ENCODE measurements at regions of chr4 and their contacts with region 1.

Region 1: DNA sequence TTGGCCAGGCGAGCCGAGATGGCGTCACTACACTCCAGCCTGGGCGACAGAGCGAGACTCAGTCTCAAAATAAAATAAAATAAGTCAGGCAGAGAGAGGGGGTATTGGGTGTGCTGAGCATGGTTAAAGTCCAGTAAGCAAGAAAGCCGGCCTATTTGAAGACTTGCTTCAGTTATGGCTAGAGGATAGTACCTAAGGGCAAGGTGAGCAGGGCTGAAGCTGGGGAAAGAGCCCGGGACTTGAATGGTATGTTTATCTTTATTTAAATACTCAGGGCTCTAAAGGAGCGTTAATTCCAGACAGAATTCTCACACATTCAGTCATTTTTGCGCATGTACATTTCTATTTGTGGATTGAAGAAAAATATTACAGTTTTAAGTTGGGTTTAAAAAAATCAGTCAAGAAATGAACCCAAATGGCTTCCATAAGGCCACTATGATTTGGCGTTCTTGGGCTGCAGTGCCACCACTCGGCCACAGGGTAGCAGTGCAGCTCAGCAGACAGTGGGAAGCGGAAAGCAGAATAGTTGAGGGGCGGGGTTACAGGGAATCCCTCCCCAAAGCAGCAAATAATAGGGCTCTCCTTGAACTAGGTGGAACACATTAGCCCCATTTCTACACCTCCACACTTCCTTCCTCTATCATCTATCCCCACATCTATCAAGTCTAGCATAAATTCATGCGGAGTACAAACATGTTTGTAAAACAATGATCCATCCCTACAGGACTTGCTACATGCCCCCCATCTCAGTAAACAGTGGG is 37.2 kb upstream of the SH3D19 start:
- DNase-seq: peak; percentile 90
- H3K4me3 ChIP-seq: no peak overlapping the region
- H3K27ac ChIP-seq: no peak overlapping the region
- H3K4me1 ChIP-seq: no peaks in the 10 kb centered on the region
- H3K27me3 ChIP-seq: no peaks in the 10 kb centered on the region
- CTCF ChIP-seq: peak; percentile 94 to 97 (median 96)
- EP300 ChIP-seq: no peak
- POLR2A ChIP-seq: no peak

Region 2: GRCh38 chr4:151117371-151117962 is 245.1 kb before region 1 on chr4:
- intact Hi-C with region 1: loop called (anchors 1 kb)
- DNase-seq: no peak
- H3K4me3 ChIP-seq: no peak overlapping the region
- H3K27ac ChIP-seq: peak overlapping the region in 3 of 4 donors; percentile 34 to 61 (median 43)
- H3K4me1 ChIP-seq: peaks cover 0 to 10% (median 2%) of the 10 kb centered on the region in 4 donors
- H3K27me3 ChIP-seq: no peaks in the 10 kb centered on the region
- CTCF ChIP-seq: peak; percentile 15 to 76 (median 50)
- EP300 ChIP-seq: no peak
- POLR2A ChIP-seq: no peak

Region 3: DNA sequence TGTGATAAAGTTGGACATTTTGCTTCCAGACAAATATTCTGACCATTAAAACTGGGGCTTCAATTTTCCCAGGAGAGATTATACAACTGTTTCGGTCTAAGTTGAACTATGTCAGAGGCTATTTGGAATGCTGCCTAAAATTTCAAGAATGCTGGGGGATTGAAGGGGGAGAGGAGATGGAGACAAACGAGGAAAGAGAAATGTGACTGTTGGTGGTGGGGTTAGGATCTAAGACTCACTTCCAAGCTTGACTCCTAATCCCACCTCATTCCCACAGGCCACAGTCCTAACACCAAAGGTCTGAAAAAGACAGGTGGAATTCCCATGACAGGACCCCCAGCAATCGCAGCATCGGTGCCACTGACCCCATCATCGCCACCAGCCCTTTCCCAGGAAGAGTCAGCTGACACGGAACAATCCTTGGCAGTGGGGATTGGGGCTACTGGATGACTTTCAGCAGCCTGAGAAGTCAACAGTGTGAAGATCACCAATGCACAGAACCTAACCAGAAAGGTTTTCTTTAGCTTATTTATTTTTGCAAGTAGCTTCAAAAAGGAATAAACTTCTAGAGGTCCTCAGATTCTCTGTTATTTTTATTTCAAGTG is 159.6 kb before region 1 on chr4:
- intact Hi-C with region 1: no loop called
- DNase-seq: no peak
- H3K4me3 ChIP-seq: no peak overlapping the region
- H3K27ac ChIP-seq: peak overlapping the region; percentile 33 to 64 (median 48)
- H3K4me1 ChIP-seq: peaks cover 0 to 69% (median 61%) of the 10 kb centered on the region in 4 donors
- H3K27me3 ChIP-seq: no peaks in the 10 kb centered on the region
- CTCF ChIP-seq: no peak
- EP300 ChIP-seq: no peak
- POLR2A ChIP-seq: no peak

Region 4: GRCh38 chr4:151238477-151238876 is 124.1 kb before region 1 on chr4:
- intact Hi-C with region 1: loop called (anchors 5 kb)
- DNase-seq: no peak
- H3K4me3 ChIP-seq: no peak overlapping the region
- H3K27ac ChIP-seq: peak overlapping the region in 1 of 4 donors; percentile 1
- H3K4me1 ChIP-seq: peaks cover 0 to 20% (median 4%) of the 10 kb centered on the region in 4 donors
- H3K27me3 ChIP-seq: no peaks in the 10 kb centered on the region
- CTCF ChIP-seq: no peak
- EP300 ChIP-seq: no peak
- POLR2A ChIP-seq: no peak

Region 5: GRCh38 chr4:151276787-151277562 is 85.6 kb before region 1 on chr4 and contains the start of gene PRSS48:
- intact Hi-C with region 1: loop called (anchors 2 kb)
- DNase-seq: peak; percentile 67
- H3K4me3 ChIP-seq: no peak within 1 kb of the TSS
- H3K27ac ChIP-seq: no peak within 1 kb of the TSS
- H3K4me1 ChIP-seq: peaks cover 0 to 38% (median 13%) of the 10 kb centered on the region in 4 donors
- H3K27me3 ChIP-seq: no peaks in the 10 kb centered on the region
- CTCF ChIP-seq: peak in 3 of 4 experiments; percentile 39 to 55 (median 41)
- EP300 ChIP-seq: no peak
- POLR2A ChIP-seq: no peak
- total RNA-seq, gene PRSS48: not detected

Measured in sigmoid colon (tissue), 7 donors.